ENCODE measurements at regions of chr6 and their contacts with region 1.

Region 1: GRCh38 chr6:159789377-159790148 is at the start of gene TCP1:
- DNase-seq: peak; percentile 93 to 100 (median 96)
- ATAC-seq: peak; percentile 91
- H3K4me3 ChIP-seq: peak within 1 kb of the TSS; percentile 93
- H3K27ac ChIP-seq: peak within 1 kb of the TSS; percentile 95
- H3K4me1 ChIP-seq: peaks cover 14 to 22% of the 10 kb centered on the region in 2 experiments; a peak in 4 of 5 replicates
- H3K27me3 ChIP-seq: no peaks in the 10 kb centered on the region
- CTCF ChIP-seq: no peak
- EP300 ChIP-seq: peak; percentile 73
- POLR2A ChIP-seq: peak; percentile 98
- RAD21 ChIP-seq: 0 out of 4 replicates have a peak, but pooled peaks of 1 of the 2 experiments have one; percentile 9
- polyA plus RNA-seq, gene TCP1: 475 to 645 TPM

Region 2: DNA sequence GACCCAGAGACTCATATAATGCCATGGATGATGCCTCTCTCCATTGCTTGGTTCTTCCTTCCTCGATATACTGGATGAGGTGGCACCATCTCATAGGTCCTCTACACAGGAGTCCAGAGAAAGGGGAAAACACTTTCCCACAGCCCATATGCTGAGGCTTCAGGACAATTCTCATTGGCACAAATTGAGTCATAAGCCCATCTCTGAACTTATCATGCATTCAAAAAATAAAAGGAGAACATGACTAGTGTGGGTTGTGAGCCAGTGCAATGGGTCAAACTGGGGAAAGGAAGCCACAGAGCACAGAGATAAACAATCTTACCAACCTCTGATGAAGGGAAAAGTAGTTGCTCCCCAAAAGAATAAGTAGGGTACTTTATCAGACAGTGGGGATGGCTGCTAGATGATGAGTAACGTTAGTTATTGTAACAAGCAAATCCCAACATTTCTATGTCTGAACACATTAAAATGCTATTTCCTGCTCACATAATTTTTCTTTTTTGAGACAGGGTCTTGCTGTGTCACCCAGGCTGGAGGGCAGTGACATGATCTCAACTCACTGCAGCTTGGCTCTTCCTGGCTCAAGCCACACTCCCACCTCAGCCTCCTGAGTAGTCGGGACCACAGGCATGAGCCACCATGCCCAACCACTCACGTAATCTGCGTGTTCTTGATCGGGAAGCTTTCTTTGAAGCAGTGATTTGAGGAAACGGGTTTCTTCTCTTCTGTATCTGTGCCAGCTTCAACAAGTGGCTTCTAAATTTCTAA is 123.5 kb before region 1 on chr6:
- CTCF ChIA-PET with region 1: no interaction called
- POLR2A ChIA-PET with region 1: no interaction called
- in situ Hi-C with region 1: no loop called
- intact Hi-C with region 1: no loop called
- DNase-seq: no peak
- ATAC-seq: no peak
- H3K4me3 ChIP-seq: no peak overlapping the region
- H3K27ac ChIP-seq: no peak overlapping the region
- H3K4me1 ChIP-seq: no peaks in the 10 kb centered on the region
- H3K27me3 ChIP-seq: no peaks in the 10 kb centered on the region
- CTCF ChIP-seq: no peak
- EP300 ChIP-seq: no peak
- POLR2A ChIP-seq: no peak
- RAD21 ChIP-seq: no peak

Region 3: DNA sequence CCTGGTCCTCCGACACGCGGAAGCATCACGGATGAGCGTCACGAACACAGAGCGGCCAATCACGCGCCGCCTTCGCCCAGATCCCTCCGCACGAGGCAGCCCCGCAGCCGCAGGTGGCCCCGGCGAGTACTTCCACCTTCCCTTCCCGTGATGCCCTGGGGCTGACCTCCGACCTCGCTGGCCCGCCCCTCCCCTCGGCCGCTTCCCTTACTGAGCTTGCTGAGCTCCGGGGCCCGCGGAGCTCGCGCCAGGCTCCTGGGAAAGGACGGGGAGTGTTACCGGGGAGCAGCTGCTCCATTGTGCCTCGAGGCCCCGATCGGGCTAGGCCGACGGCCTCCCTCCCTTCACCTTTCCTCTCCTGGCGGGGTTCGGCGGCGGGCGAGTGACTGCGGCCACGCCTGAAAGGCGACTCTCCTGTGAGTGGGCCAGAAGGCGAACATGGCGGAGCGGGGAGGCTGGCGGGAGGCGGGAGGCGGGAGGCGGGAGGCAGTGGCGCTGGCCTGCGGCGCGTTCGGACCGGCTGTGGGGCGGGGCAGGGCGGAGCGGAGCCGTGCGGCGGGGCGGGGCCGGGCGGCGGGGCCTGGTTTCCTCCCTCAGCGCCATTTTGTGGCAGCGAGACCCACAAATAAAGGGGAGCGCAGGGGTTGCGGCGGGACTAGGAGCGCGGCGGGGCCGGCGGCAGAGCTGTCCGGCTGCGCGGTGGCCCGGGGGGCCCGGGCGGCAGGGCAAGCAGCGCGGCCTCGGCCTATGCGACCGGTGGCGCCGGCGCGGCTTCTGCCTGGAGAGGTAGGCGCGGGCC is 62.4 kb before region 1 on chr6 and contains the start of gene WTAP:
- CTCF ChIA-PET with region 1: no interaction called
- POLR2A ChIA-PET with region 1: interaction called, 19 read pairs
- in situ Hi-C with region 1: no loop called
- intact Hi-C with region 1: loop called (anchors 1 kb)
- DNase-seq: peak; percentile 94 to 99 (median 95)
- ATAC-seq: peak; percentile 89
- H3K4me3 ChIP-seq: peak within 1 kb of the TSS; percentile 88
- H3K27ac ChIP-seq: peak within 1 kb of the TSS; percentile 98
- H3K4me1 ChIP-seq: peaks cover 6 to 10% of the 10 kb centered on the region in 2 experiments; a peak in 4 of 5 replicates
- H3K27me3 ChIP-seq: no peaks in the 10 kb centered on the region
- CTCF ChIP-seq: no peak
- EP300 ChIP-seq: no peak; the same call in none of the 2 replicates
- POLR2A ChIP-seq: peak; percentile 100
- RAD21 ChIP-seq: no peak
- polyA plus RNA-seq, gene WTAP: 73.9 to 115 TPM

Region 4: DNA sequence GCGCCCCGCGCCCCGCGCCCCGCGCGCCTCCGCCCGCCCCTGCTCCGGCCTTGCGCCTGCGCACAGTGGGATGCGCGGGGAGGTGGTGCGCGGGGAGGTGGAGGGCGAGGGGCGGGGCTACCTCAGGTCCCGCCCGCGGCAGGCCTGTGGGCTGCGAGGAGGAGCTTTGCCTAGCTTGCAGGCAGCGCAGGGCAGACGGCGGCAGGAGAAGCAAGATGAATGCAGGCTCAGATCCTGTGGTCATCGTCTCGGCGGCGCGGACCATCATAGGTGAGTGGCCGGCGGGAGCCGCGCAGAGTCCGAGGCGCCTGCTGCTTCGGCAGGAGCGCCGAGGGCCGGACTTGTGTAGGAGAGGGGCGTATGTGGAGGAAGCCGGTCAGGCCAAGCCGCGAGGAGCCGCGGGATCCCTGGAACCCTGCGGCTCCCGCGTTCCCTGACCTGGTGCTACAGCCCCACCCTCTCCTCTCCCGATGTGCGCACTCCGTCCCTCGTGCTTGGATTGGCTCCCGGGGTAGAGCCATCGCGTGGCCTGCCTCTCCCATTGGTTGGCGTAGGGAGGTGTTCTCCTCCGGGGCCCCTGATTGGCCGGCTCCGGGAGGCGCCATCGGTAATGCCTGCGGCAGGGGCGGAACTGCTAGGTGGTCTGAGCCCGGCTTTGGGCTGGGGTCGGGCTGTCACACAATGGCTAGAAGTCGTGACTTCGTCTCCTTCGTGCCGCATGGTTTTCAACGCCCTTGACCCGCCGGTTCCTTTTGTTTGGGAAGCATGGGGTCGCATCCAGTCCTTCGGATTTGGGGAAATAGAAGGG is 27.5 kb before region 1 on chr6 and contains the start of gene ACAT2:
- CTCF ChIA-PET with region 1: no interaction called
- POLR2A ChIA-PET with region 1: interaction called, 10 read pairs
- in situ Hi-C with region 1: no loop called
- intact Hi-C with region 1: loop called (anchors 2 kb)
- DNase-seq: peak; percentile 98 to 100 (median 99)
- ATAC-seq: peak; percentile 98
- H3K4me3 ChIP-seq: peak within 1 kb of the TSS; percentile 66
- H3K27ac ChIP-seq: peak within 1 kb of the TSS; percentile 87
- H3K4me1 ChIP-seq: peaks cover 16 to 26% of the 10 kb centered on the region in 2 experiments; a peak in 4 of 5 replicates
- H3K27me3 ChIP-seq: no peaks in the 10 kb centered on the region
- CTCF ChIP-seq: no peak
- EP300 ChIP-seq: 0 out of 2 replicates have a peak, but pooled peaks have one; percentile 1
- POLR2A ChIP-seq: peak; percentile 94
- RAD21 ChIP-seq: no peak
- polyA plus RNA-seq, gene ACAT2: 247 to 309 TPM

Region 5: DNA sequence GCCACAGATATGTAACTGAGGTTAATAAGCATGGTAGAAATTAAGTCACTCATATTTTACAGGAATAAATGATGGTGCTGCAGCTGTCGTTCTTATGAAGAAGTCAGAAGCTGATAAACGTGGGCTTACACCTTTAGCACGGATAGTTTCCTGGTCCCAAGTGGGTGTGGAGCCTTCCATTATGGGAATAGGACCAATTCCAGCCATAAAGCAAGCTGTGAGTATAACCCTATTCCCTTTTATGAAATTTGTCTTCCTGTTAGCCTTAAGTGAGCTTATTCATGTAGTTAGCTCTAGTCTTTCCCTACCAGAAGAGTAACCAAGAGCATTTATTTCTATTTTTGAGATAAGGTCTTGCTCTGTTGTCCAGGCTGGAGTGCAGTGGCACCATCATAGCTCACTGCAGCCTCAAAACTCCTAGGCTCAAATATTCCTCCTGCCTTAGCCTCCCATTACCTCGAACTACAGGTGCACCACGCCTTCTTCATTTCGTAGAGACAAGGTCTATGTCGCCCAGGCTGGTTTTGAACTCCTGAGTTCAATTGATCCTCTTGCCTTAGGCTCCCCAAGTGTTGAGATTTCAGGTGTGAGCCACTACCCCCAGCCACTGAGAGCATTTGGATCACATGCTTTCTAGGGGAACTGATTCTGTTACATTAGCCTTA is 12.2 kb before region 1 on chr6:
- CTCF ChIA-PET with region 1: no interaction called
- POLR2A ChIA-PET with region 1: interaction called, 20 read pairs
- in situ Hi-C with region 1: no loop called
- intact Hi-C with region 1: no loop called
- DNase-seq: peak in 1 of 4 experiments; percentile 7
- ATAC-seq: peak; percentile 55
- H3K4me3 ChIP-seq: no peak overlapping the region
- H3K27ac ChIP-seq: no peak overlapping the region
- H3K4me1 ChIP-seq: no peaks in the 10 kb centered on the region
- H3K27me3 ChIP-seq: no peaks in the 10 kb centered on the region
- CTCF ChIP-seq: no peak
- EP300 ChIP-seq: no peak
- POLR2A ChIP-seq: peak; percentile 76
- RAD21 ChIP-seq: no peak

Region 6: DNA sequence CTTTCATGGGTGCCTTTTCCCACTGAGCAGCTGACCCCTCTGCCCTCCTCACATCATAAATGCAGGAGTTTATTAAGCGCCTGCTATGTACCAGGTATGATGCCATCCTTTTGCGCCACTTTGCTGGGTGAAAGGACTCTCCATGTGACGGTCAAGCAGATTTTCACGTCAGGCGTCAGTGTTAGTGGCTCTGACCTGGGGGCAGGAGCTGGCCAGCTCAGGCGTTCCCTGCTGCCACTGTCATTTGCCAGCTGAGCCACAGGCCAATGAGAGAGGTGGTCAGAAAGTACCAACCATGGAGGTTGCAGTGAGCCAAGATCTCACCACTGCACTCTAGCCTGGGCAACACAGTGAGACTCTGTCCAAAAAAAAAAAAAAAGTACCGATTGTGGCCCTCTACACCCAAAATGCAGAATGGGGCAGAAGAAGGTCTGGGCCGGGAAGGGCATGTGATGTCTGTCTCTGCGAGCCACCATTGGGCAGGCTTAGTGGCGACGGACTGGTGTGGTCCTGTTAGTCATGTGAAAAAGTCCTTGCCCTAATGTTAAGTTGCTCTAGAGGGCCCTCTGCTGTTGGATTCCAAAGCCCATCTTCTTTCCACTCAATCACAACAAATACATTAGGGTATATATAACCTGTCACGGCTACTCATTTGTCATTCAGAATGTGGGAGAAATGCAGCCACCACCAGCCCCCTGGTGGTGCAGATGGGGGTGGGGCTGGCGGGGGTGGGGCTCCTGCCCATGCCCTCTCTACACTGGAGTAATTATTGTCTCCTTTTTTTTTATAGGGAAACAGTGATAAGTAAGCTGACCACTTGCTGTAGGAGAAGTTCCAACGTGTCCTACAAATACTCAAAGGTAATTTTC is 313.6 kb after region 1 on chr6:
- CTCF ChIA-PET with region 1: no interaction called
- POLR2A ChIA-PET with region 1: interaction called, 5 read pairs
- in situ Hi-C with region 1: no loop called
- intact Hi-C with region 1: loop called (anchors 1 kb)
- DNase-seq: peak; percentile 39 to 59 (median 47)
- ATAC-seq: peak; percentile 30
- H3K4me3 ChIP-seq: no peak overlapping the region
- H3K27ac ChIP-seq: no peak overlapping the region
- H3K4me1 ChIP-seq: peaks cover 32% of the 10 kb centered on the region in 2 experiments
- H3K27me3 ChIP-seq: no peaks in the 10 kb centered on the region; a peak in 1 of 5 replicates
- CTCF ChIP-seq: peak; percentile 54 to 75 (median 62)
- EP300 ChIP-seq: no peak
- POLR2A ChIP-seq: no peak
- RAD21 ChIP-seq: peak in 1 of 2 experiments; percentile 63; a peak in 3 of 4 replicates

Measured in K562 (cell line).